Tibial artery (tissue), 4 donors: ENCODE measurements at regions of chr3 and their contacts with region 1.

Region 1: DNA sequence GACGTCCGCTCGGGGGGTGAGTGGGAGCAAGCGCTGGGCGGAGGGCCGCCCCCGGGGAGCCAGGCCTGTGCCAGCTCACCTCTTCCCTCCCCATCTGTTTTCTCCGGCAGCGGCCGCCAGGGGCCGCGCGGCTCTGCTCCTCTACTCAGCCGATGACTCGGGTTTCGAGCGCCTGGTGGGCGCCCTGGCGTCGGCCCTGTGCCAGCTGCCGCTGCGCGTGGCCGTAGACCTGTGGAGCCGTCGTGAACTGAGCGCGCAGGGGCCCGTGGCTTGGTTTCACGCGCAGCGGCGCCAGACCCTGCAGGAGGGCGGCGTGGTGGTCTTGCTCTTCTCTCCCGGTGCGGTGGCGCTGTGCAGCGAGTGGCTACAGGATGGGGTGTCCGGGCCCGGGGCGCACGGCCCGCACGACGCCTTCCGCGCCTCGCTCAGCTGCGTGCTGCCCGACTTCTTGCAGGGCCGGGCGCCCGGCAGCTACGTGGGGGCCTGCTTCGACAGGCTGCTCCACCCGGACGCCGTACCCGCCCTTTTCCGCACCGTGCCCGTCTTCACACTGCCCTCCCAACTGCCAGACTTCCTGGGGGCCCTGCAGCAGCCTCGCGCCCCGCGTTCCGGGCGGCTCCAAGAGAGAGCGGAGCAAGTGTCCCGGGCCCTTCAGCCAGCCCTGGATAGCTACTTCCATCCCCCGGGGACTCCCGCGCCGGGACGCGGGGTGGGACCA is 632 bp upstream of the CRELD1 start:
- DNase-seq: peak; percentile 81 to 92
- H3K4me3 ChIP-seq: peak overlapping the region; percentile 57 to 88
- H3K27ac ChIP-seq: peak overlapping the region; percentile 90 to 91
- H3K4me1 ChIP-seq: peaks cover 4 to 27% (median 22%) of the 10 kb centered on the region in 4 donors
- H3K27me3 ChIP-seq: no peaks in the 10 kb centered on the region
- CTCF ChIP-seq: peak; percentile 75 to 81

Region 2: GRCh38 chr3:9452417-9452816 is 480.6 kb before region 1 on chr3:
- intact Hi-C with region 1: no loop called
- DNase-seq: no peak
- H3K4me3 ChIP-seq: no peak overlapping the region
- H3K27ac ChIP-seq: no peak overlapping the region
- H3K4me1 ChIP-seq: no peaks in the 10 kb centered on the region
- H3K27me3 ChIP-seq: no peaks in the 10 kb centered on the region
- CTCF ChIP-seq: no peak

Region 3: GRCh38 chr3:9731206-9732079 is 201.6 kb before region 1 on chr3 and contains the start of gene BRPF1:
- intact Hi-C with region 1: loop called (anchors 5 kb)
- DNase-seq: peak; percentile 100
- H3K4me3 ChIP-seq: peak within 1 kb of the TSS; percentile 91 to 100
- H3K27ac ChIP-seq: peak within 1 kb of the TSS; percentile 88 to 98
- H3K4me1 ChIP-seq: peaks cover 11 to 28% (median 24%) of the 10 kb centered on the region in 4 donors
- H3K27me3 ChIP-seq: no peaks in the 10 kb centered on the region
- CTCF ChIP-seq: peak in 1 of 2 experiments; percentile 17

Region 4: DNA sequence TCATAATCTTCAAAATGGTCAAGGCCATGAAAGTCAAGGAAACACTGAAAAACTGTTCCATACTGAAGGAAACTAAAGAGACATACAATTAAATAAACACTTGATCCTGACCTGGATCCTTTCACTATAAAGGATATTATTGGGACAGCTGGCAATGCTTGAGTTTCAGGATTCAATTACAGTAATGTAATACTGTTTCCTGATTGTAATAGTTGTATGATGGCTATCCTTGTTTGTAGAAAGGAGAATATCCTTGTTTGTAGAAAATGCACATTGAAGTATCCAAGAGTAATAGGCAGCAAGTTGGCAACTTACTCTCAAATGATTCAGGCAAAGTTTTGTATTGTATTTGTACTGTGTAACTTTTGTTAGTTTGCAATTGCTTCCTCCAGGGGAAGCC is 57.6 kb before region 1 on chr3:
- intact Hi-C with region 1: no loop called
- DNase-seq: no peak
- H3K4me3 ChIP-seq: no peak overlapping the region
- H3K27ac ChIP-seq: no peak overlapping the region
- H3K4me1 ChIP-seq: no peaks in the 10 kb centered on the region
- H3K27me3 ChIP-seq: no peaks in the 10 kb centered on the region
- CTCF ChIP-seq: no peak

Region 5: GRCh38 chr3:9986237-9986725 is 53.3 kb after region 1 on chr3:
- intact Hi-C with region 1: no loop called
- DNase-seq: no peak
- H3K4me3 ChIP-seq: peak overlapping the region; percentile 65 to 92
- H3K27ac ChIP-seq: peak overlapping the region; percentile 72 to 90
- H3K4me1 ChIP-seq: peaks cover 0 to 48% (median 23%) of the 10 kb centered on the region in 4 donors
- H3K27me3 ChIP-seq: no peaks in the 10 kb centered on the region
- CTCF ChIP-seq: no peak

Region 6: DNA sequence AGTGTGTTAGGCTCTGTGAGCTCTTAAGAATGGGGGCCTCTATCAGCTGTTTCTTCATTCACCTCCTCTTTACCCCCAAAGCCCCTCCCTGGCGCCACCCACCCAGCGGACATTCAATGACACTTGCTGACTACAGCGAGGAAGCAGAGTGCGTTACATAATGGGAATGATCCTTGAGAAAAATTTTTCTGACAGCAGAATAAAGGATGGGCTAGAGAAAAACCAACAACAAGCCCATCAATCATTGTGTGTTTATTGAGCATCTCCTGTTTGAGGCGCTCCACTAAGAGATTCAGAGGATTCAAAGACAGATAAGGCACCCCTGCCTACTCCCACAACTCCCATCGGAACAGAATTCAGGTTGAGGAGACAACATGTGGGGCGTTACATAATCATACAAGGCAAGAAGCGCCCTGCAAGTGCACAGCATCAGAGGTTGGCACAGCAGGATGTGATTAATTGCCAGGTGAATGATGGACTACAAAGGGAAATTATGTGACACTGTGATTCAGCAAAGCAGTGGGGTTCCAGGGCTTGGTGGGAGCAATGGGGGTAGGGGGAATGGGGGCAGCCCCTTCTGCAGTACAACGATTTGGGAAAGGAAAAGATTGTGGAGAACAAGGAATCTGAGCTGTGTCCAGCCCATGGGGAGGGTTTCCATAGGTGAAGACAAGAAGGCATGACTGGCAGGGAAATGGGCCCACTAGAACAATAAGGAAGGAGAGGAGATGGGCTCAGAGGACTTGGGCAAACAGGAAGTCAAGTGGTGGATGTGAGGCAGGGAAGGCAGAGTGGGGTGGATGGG is 713.7 kb after region 1 on chr3:
- intact Hi-C with region 1: no loop called
- DNase-seq: no peak
- H3K4me3 ChIP-seq: no peak overlapping the region
- H3K27ac ChIP-seq: no peak overlapping the region
- H3K4me1 ChIP-seq: no peaks in the 10 kb centered on the region
- H3K27me3 ChIP-seq: peaks cover 0 to 10% of the 10 kb centered on the region in 2 donors
- CTCF ChIP-seq: no peak